Activated T-helper 2 cell treated with anti-CD3 and anti-CD28 coated beads, Interferon-gamma antibody, Interleukin-2, Interleukin-4, amounts not matched to agents 10 μg/mL and 5 μg/mL and 100 μg/mL, durations not matched to agents 14 hours and 24 hours and 36 hours (primary cell): ENCODE measurements at regions of chr16 and their contacts with region 1.

Region 1: DNA sequence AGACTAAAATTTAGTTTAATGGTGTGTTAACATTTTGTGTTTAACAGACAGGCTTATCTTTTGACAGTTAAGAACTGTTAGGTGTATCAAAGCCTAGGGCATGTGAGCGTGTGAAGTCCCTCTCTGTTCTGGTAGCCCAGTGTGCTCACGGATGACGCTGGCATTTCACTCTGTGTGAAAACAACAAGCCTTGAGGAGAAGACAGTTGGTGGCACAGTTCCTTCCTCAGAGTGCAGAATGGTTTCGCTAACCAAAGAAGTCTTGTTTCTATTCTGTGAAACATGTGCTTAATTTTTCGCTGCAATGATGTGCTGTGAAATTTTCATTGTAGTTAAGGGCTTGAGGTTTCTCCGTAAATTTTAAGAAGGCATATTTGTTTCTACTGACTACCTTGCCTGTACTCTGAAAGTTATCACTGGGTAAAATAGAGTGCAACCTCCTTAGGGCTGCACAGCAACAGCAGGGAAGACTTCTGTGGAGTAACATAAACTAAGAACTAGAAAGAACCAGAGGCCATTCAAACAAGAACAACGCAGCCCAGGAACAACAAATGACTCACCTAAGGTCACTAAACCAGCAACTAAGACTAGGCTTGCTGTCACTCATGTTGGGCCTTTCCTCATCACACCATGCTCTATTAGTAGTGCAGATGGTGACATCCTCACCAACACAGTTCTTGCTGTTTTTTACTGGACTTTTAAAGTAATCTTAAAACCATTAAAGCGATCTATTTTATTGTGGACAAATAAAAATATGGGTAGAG is 33.4 kb downstream of the BRD7 start:
- DNase-seq: no peak
- H3K4me3 Mint-ChIP-seq: no peak overlapping the region
- H3K27ac Mint-ChIP-seq: peak overlapping the region; percentile 93
- H3K4me1 Mint-ChIP-seq: peaks cover 35% of the 10 kb centered on the region
- H3K27me3 Mint-ChIP-seq: no peaks in the 10 kb centered on the region

Region 2: GRCh38 chr16:50266337-50267091 is 68.9 kb before region 1 on chr16 and contains the start of gene ADCY7:
- intact Hi-C with region 1: loop called (anchors 1 kb)
- DNase-seq: peak; percentile 77
- H3K4me3 Mint-ChIP-seq: peak within 1 kb of the TSS; percentile 91
- H3K27ac Mint-ChIP-seq: peak within 1 kb of the TSS; percentile 92
- H3K4me1 Mint-ChIP-seq: peaks cover 47% of the 10 kb centered on the region
- H3K27me3 Mint-ChIP-seq: no peaks in the 10 kb centered on the region
- total RNA-seq, gene ADCY7: 78.7 and 89.5 TPM in 2 replicates

Region 3: GRCh38 chr16:50301626-50302471 is 33.5 kb before region 1 on chr16:
- intact Hi-C with region 1: no loop called
- DNase-seq: no peak
- H3K4me3 Mint-ChIP-seq: no peak overlapping the region
- H3K27ac Mint-ChIP-seq: no peak overlapping the region
- H3K4me1 Mint-ChIP-seq: no peaks in the 10 kb centered on the region
- H3K27me3 Mint-ChIP-seq: no peaks in the 10 kb centered on the region

Region 4: DNA sequence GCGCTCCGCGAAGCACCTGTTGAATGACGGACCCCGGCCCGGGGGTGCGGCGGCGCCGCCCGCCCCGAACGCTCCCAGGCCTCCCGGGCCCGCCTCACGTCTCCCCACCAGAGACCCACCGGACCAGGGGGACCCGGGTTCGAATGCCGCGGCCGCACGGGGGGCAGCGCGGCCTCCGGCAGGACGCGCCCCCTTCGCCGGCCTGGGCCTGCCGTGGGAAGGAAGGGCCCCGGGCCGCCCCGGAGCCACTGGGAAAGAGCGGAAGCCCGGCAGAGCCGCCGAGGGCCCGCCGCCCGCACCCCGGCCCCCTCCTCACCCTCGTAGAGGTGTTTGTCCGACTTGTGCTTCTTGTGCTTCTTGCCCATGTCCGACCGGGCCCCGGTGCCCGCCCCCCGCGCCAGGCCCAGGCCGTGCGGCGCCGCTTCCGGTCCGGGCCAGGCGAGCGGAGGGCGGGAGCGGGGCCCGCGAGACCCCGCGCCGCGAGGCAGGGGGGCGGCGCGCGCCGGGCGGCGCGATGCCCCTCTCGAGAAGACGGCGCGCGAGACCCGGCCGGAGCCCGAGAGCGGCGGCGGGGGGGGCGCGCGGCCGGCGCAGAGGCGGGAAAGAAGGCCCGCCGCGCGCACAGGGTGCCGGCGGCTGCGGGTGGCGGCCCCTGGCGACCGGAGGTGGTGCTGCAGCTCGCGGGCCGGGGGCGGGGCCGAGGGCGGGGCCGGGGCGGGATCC is 33.2 kb after region 1 on chr16 and contains the start of gene BRD7:
- intact Hi-C with region 1: loop called (anchors 2 kb)
- DNase-seq: peak; percentile 59
- H3K4me3 Mint-ChIP-seq: peak within 1 kb of the TSS; percentile 99
- H3K27ac Mint-ChIP-seq: peak within 1 kb of the TSS; percentile 94
- H3K4me1 Mint-ChIP-seq: peaks cover 40% of the 10 kb centered on the region
- H3K27me3 Mint-ChIP-seq: no peaks in the 10 kb centered on the region
- total RNA-seq, gene BRD7: 76.0 and 79.5 TPM in 2 replicates

Region 5: GRCh38 chr16:50448501-50448900 is 113.1 kb after region 1 on chr16:
- intact Hi-C with region 1: no loop called
- DNase-seq: no peak
- H3K4me3 Mint-ChIP-seq: no peak overlapping the region
- H3K27ac Mint-ChIP-seq: no peak overlapping the region
- H3K4me1 Mint-ChIP-seq: no peaks in the 10 kb centered on the region
- H3K27me3 Mint-ChIP-seq: peaks cover 6% of the 10 kb centered on the region

Region 6: GRCh38 chr16:50741808-50742575 is 406.6 kb after region 1 on chr16 and contains the start of gene CYLD:
- intact Hi-C with region 1: loop called (anchors 5 kb)
- DNase-seq: peak; percentile 100
- H3K4me3 Mint-ChIP-seq: peak within 1 kb of the TSS; percentile 90
- H3K27ac Mint-ChIP-seq: peak within 1 kb of the TSS; percentile 95
- H3K4me1 Mint-ChIP-seq: peaks cover 43% of the 10 kb centered on the region
- H3K27me3 Mint-ChIP-seq: no peaks in the 10 kb centered on the region
- total RNA-seq, gene CYLD: 189 and 201 TPM in 2 replicates

Region 7: GRCh38 chr16:50806099-50807062 is 471.0 kb after region 1 on chr16:
- intact Hi-C with region 1: loop called (anchors 5 kb)
- DNase-seq: peak; percentile 78
- H3K4me3 Mint-ChIP-seq: peak overlapping the region; percentile 68
- H3K27ac Mint-ChIP-seq: peak overlapping the region; percentile 47
- H3K4me1 Mint-ChIP-seq: peaks cover 12% of the 10 kb centered on the region
- H3K27me3 Mint-ChIP-seq: peaks cover 2% of the 10 kb centered on the region